CD14-positive monocyte (primary cell): ENCODE measurements at regions of chr11 and their contacts with region 1.

Region 1: GRCh38 chr11:47750725-47751124 is 16.4 kb downstream of the FNBP4 start:
- DNase-seq: no peak
- H3K4me3 ChIP-seq: no peak overlapping the region
- H3K4me3 Mint-ChIP-seq: no peak overlapping the region
- H3K27ac ChIP-seq: no peak overlapping the region
- H3K27ac Mint-ChIP-seq: no peak overlapping the region
- H3K4me1 ChIP-seq: no peaks in the 10 kb centered on the region
- H3K4me1 Mint-ChIP-seq: no peaks in the 10 kb centered on the region
- H3K27me3 ChIP-seq: no peaks in the 10 kb centered on the region
- H3K27me3 Mint-ChIP-seq: no peaks in the 10 kb centered on the region
- CTCF ChIP-seq: no peak

Region 2: DNA sequence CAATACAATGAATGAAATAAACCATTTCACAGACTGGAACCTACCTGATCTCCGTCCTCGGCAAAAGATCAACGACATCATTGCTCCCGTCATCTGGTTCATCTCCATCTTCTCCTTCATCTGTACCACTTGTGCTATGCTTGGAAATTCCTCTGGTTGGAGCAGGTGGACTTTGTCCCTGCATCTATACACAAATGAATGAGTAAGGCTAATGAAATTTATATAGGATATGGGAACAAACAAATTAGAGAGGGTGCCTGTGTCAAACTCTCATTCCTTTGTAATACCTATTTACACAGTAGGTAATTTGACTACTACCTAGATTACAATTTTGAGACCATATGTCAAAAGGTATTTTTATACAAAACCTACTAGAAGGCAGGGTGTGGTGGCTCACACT is 972.3 kb before region 1 on chr11:
- intact Hi-C with region 1: loop called in 1 of 2 experiments (anchors 10 kb)
- DNase-seq: no peak
- H3K4me3 ChIP-seq: no peak overlapping the region
- H3K4me3 Mint-ChIP-seq: no peak overlapping the region
- H3K27ac ChIP-seq: no peak overlapping the region
- H3K27ac Mint-ChIP-seq: peak overlapping the region in 1 of 7 donors; percentile 40
- H3K4me1 ChIP-seq: no peaks in the 10 kb centered on the region
- H3K4me1 Mint-ChIP-seq: no peaks in the 10 kb centered on the region
- H3K27me3 ChIP-seq: no peaks in the 10 kb centered on the region
- H3K27me3 Mint-ChIP-seq: no peaks in the 10 kb centered on the region
- CTCF ChIP-seq: no peak

Region 3: GRCh38 chr11:47305734-47306483 is 444.8 kb before region 1 on chr11:
- intact Hi-C with region 1: loop called in 1 of 2 experiments (anchors 10 kb)
- DNase-seq: no peak
- H3K4me3 ChIP-seq: no peak overlapping the region
- H3K4me3 Mint-ChIP-seq: no peak overlapping the region
- H3K27ac ChIP-seq: peak overlapping the region in 1 of 2 donors; percentile 8
- H3K27ac Mint-ChIP-seq: peak overlapping the region in 1 of 7 donors; percentile 16
- H3K4me1 ChIP-seq: no peaks in the 10 kb centered on the region
- H3K4me1 Mint-ChIP-seq: no peaks in the 10 kb centered on the region
- H3K27me3 ChIP-seq: no peaks in the 10 kb centered on the region
- H3K27me3 Mint-ChIP-seq: peaks cover 0 to 6% (median 2%) of the 10 kb centered on the region in 3 donors
- CTCF ChIP-seq: no peak

Region 4: DNA sequence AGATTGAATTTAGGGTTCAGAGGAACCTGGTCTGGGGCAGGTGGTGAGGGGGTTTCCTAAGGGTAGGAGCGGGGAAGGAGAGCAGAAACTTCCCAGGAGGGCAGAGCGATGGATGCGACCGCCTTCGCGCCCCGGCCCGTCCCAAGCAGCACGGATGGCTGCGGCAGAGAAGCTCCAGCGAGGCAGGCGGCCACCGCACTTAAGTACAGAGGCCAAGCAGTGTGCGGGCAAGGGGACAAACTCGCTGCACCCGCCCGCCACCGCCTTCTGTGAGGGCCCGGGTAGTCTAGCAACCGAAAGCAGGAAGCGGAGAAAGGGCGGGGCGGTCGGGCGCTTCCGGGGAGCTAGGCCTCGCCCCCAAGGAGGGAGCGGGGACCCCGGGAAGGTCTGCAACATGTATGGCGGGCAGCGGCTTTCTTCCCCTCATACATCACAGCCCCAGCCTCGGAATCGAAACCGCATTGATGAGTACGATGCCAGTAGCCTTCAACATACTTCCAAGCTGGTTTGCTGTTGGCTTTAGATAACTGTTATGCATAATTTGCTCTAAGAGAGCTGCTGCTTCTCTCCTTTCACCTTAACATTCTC is 35.5 kb before region 1 on chr11 and contains the start of gene AGBL2:
- intact Hi-C with region 1: no loop called
- DNase-seq: peak; percentile 44 to 66 (median 56)
- H3K4me3 ChIP-seq: peak within 1 kb of the TSS; percentile 84 to 95 (median 94)
- H3K4me3 Mint-ChIP-seq: peak within 1 kb of the TSS; percentile 99 to 100
- H3K27ac ChIP-seq: peak within 1 kb of the TSS; percentile 54 to 58
- H3K27ac Mint-ChIP-seq: peak within 1 kb of the TSS; percentile 85 to 95 (median 93)
- H3K4me1 ChIP-seq: peaks cover 8 to 12% of the 10 kb centered on the region in 2 donors
- H3K4me1 Mint-ChIP-seq: peaks cover 11% of the 10 kb centered on the region
- H3K27me3 ChIP-seq: no peaks in the 10 kb centered on the region
- H3K27me3 Mint-ChIP-seq: no peaks in the 10 kb centered on the region
- CTCF ChIP-seq: no peak
- polyA plus RNA-seq, gene AGBL2: 0.93 TPM in 1 of 3 donors, not detected in the others